ENCODE measurements at regions of chrX and their contacts with region 1.

Region 1: GRCh38 chrX:101595739-101596419 is 21.9 kb downstream of the ARMCX6 start:
- DNase-seq: peak; percentile 64
- H3K4me3 Mint-ChIP-seq: no peak overlapping the region
- H3K27ac Mint-ChIP-seq: no peak overlapping the region
- H3K4me1 Mint-ChIP-seq: peaks cover 9% of the 10 kb centered on the region
- H3K27me3 Mint-ChIP-seq: peaks cover 32% of the 10 kb centered on the region
- CTCF ChIP-seq: no peak

Region 2: DNA sequence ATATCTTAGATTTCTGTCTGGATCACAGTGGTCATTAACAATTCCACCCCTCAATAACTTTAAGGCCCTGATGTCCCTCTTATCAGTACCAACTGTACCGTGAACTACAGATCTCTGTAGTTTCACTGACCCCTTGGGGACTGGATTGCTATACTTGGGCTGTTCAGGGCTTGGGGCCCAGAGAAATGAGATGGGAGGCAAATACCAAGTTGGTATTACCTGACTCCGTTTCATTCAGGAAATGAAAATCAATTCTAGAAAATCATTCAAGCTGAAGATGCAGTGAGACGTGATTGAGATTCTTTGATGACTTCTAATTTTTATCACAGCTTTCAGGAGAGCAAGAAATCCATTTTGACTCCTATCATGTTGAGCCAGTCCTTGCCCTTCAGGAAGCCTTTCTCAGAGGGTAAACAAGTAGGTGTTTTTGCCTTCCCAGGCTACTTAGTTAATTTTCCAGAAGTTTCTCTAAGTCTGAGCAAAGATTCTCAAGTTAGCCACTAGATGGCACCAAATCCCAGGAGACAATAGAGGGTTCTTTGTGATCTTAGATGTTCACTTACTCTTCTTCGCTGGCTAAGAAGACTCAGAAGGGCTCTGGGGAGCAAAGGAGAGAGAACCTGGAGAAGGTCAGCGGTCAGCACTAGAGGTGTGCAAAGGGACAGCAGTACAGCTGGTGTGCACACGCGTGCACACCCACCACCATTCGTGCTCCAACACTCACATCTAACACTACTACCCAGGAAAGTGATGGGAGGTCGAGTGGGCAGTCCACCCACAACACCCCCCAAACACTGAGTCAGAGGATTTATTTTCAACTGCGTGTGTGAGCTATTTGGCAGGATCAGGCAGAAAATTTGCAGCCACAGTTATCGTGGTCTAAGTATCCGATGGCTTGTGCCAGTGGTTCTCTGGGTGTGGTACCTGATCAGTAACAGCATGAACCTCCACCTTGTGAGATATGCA is 180.4 kb before region 1 on chrX:
- CTCF ChIA-PET with region 1: no interaction called
- intact Hi-C with region 1: loop called (anchors 10 kb)
- DNase-seq: peak; percentile 30
- H3K4me3 Mint-ChIP-seq: no peak overlapping the region
- H3K27ac Mint-ChIP-seq: no peak overlapping the region
- H3K4me1 Mint-ChIP-seq: peaks cover 21% of the 10 kb centered on the region
- H3K27me3 Mint-ChIP-seq: peaks cover 21% of the 10 kb centered on the region
- CTCF ChIP-seq: peak; percentile 51

Region 3: DNA sequence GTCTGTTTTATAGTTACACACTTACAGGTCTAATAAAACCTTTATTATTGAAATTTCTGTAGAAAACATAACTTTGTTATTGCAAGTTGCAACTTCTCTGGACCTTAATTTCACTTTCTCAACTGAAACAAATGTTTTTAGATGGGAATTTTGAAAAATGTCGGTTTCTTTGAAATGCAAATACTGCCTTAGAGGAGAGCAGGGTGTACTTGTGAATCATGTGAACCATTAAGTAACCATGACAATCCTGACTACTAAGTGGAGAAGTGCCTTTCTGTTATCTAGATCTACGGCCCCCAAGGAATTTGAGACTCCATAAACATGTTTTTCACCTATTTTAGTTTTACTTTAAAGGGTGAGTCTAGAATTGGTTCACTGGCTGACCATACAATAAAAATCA is 72.3 kb after region 1 on chrX:
- CTCF ChIA-PET with region 1: no interaction called
- intact Hi-C with region 1: no loop called
- DNase-seq: no peak
- H3K4me3 Mint-ChIP-seq: no peak overlapping the region
- H3K27ac Mint-ChIP-seq: no peak overlapping the region
- H3K4me1 Mint-ChIP-seq: no peaks in the 10 kb centered on the region
- H3K27me3 Mint-ChIP-seq: peaks cover 19% of the 10 kb centered on the region
- CTCF ChIP-seq: no peak

Region 4: GRCh38 chrX:101759000-101759399 is 163.1 kb after region 1 on chrX:
- CTCF ChIA-PET with region 1: no interaction called
- intact Hi-C with region 1: loop called (anchors 5 kb)
- DNase-seq: peak; percentile 27
- H3K4me3 Mint-ChIP-seq: no peak overlapping the region
- H3K27ac Mint-ChIP-seq: no peak overlapping the region
- H3K4me1 Mint-ChIP-seq: no peaks in the 10 kb centered on the region
- H3K27me3 Mint-ChIP-seq: no peaks in the 10 kb centered on the region
- CTCF ChIP-seq: no peak

Region 5: DNA sequence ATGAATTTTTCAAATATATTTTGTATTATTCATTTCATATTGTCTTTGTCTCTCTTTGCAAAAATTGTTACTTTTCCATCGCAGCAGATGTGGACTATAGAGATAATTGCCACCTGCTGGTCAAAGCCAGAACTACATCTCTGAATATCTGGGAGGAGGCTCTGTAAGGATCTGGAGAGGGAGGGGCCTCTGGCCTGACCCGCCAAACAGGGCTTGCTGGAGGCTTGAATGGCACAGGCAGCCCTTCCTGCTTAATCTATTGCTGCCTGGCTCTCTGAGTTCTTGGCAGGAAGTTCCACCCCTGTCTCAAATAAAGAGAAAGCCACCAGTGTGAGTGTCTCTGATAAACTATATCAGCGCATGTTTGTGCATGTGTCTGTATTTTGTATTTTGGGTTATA is 203.5 kb after region 1 on chrX:
- CTCF ChIA-PET with region 1: no interaction called
- intact Hi-C with region 1: loop called (anchors 5 kb)
- DNase-seq: peak; percentile 83
- H3K4me3 Mint-ChIP-seq: no peak overlapping the region
- H3K27ac Mint-ChIP-seq: no peak overlapping the region
- H3K4me1 Mint-ChIP-seq: no peaks in the 10 kb centered on the region
- H3K27me3 Mint-ChIP-seq: peaks cover 12% of the 10 kb centered on the region
- CTCF ChIP-seq: no peak

Region 6: GRCh38 chrX:102085706-102086105 is 489.8 kb after region 1 on chrX:
- CTCF ChIA-PET with region 1: no interaction called
- intact Hi-C with region 1: loop called (anchors 10 kb)
- DNase-seq: no peak
- H3K4me3 Mint-ChIP-seq: no peak overlapping the region
- H3K27ac Mint-ChIP-seq: no peak overlapping the region
- H3K4me1 Mint-ChIP-seq: no peaks in the 10 kb centered on the region
- H3K27me3 Mint-ChIP-seq: no peaks in the 10 kb centered on the region
- CTCF ChIP-seq: no peak

Region 7: DNA sequence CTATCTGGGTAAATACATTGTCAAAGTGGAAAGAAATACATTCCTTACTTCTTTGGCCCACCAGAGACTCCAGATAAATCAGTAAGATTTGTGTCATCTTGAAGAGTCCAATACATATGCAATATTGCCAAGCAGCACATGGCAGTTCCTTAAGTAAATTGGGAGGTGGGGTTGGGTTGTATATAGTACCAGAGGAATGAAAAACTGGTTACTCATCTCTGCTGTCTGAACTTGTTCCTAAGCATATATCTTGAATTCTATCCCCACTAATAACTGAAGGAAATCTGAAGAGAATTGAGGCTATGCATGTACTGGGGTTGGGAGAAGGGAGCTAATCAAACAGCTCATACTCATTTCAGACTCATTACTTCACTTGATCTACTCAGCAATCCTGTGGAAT is 1644.3 kb after region 1 on chrX:
- CTCF ChIA-PET with region 1: no interaction called
- intact Hi-C with region 1: no loop called
- DNase-seq: no peak
- H3K4me3 Mint-ChIP-seq: no peak overlapping the region
- H3K27ac Mint-ChIP-seq: no peak overlapping the region
- H3K4me1 Mint-ChIP-seq: no peaks in the 10 kb centered on the region
- H3K27me3 Mint-ChIP-seq: peaks cover 30% of the 10 kb centered on the region
- CTCF ChIP-seq: no peak

Measured in Calu3 (cell line).